Right cardiac atrium (tissue), 5 donors: ENCODE measurements at regions of chr21 and their contacts with region 1.

Region 1: DNA sequence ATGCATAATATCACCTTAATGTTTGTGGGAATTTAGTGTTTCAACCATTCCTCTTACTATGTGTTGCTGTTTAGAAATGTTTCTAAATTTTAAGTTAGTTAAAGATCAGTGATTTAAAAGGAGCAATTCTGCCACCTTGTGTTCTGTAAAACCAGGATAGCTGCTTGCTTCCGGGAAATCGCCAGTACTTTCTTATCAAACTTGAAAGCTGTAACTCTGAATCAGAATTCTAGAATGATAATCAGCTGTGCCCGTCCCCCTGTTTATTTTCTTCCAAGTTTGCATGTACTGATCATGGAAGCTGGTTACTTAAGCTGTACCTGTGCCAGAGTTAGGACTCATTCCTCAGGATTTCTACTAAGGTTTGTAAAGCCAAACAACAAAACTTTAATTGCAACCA is 656.4 kb downstream of the LTN1 start:
- DNase-seq: no peak
- ATAC-seq: peak; percentile 39 to 46
- H3K4me3 ChIP-seq: no peak overlapping the region
- H3K27ac ChIP-seq: no peak overlapping the region
- H3K4me1 ChIP-seq: peaks cover 2% of the 10 kb centered on the region
- H3K27me3 ChIP-seq: no peaks in the 10 kb centered on the region

Region 2: GRCh38 chr21:26842976-26843932 is 1493.1 kb before region 1 on chr21:
- intact Hi-C with region 1: loop called in 2 of 4 experiments (anchors 5 to 10 kb)
- DNase-seq: peak; percentile 94 to 98 (median 97)
- ATAC-seq: peak; percentile 50 to 67
- H3K4me3 ChIP-seq: peak overlapping the region; percentile 77
- H3K27ac ChIP-seq: peak overlapping the region; percentile 95
- H3K4me1 ChIP-seq: peaks cover 6% of the 10 kb centered on the region
- H3K27me3 ChIP-seq: no peaks in the 10 kb centered on the region

Region 3: DNA sequence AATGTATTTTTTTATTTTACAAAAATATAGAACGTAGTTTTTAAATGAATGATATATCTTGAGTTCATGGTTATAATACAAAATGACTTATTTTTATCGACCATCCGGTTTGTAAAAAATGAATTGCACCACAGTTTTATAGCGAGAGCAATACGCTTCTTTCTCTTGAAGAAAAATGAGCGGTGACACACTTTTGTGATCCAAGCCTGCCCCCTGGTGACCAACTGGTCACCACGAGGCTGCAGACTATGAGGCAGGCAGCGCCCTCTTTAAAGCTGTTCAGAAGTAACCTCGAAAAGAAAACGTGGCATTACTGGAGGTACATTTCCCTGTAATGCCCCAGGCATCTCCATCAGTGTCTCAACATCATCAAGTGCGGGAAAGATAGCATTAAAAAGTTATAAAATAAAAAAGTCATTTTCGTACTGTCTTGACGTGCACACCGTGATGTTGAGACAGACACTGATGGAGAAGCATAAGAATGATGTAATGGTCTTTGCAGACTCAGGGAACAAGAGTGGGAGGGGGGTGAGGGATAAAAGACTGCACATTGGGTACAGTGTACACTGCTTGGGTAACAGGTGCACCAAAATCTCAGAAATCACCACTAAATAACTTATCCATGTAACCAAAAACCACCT is 635.2 kb before region 1 on chr21:
- intact Hi-C with region 1: loop called in 1 of 4 experiments (anchors 5 kb)
- DNase-seq: peak; percentile 85 to 94 (median 90)
- ATAC-seq: peak; percentile 81 to 89
- H3K4me3 ChIP-seq: no peak overlapping the region
- H3K27ac ChIP-seq: no peak overlapping the region
- H3K4me1 ChIP-seq: no peaks in the 10 kb centered on the region
- H3K27me3 ChIP-seq: no peaks in the 10 kb centered on the region

Region 4: GRCh38 chr21:28069450-28069923 is 266.8 kb before region 1 on chr21:
- intact Hi-C with region 1: loop called in 2 of 4 experiments (anchors 10 kb)
- DNase-seq: no peak
- ATAC-seq: no peak
- H3K4me3 ChIP-seq: no peak overlapping the region
- H3K27ac ChIP-seq: no peak overlapping the region
- H3K4me1 ChIP-seq: no peaks in the 10 kb centered on the region
- H3K27me3 ChIP-seq: no peaks in the 10 kb centered on the region

Region 5: GRCh38 chr21:28745131-28746016 is 409.1 kb after region 1 on chr21:
- intact Hi-C with region 1: loop called in 3 of 4 experiments (anchors 5 to 10 kb)
- DNase-seq: peak; percentile 67 to 79 (median 78)
- ATAC-seq: peak; percentile 88 to 89
- H3K4me3 ChIP-seq: peak overlapping the region; percentile 78
- H3K27ac ChIP-seq: peak overlapping the region; percentile 84
- H3K4me1 ChIP-seq: no peaks in the 10 kb centered on the region
- H3K27me3 ChIP-seq: no peaks in the 10 kb centered on the region